ENCODE measurements at regions of chr14 and their contacts with region 1.

Region 1: GRCh38 chr14:93464271-93464670 is 33.5 kb downstream of the UNC79 start:
- DNase-seq: no peak
- H3K4me3 ChIP-seq: no peak overlapping the region
- H3K27ac ChIP-seq: no peak overlapping the region
- H3K4me1 ChIP-seq: no peaks in the 10 kb centered on the region
- H3K27me3 ChIP-seq: no peaks in the 10 kb centered on the region
- CTCF ChIP-seq: no peak

Region 2: DNA sequence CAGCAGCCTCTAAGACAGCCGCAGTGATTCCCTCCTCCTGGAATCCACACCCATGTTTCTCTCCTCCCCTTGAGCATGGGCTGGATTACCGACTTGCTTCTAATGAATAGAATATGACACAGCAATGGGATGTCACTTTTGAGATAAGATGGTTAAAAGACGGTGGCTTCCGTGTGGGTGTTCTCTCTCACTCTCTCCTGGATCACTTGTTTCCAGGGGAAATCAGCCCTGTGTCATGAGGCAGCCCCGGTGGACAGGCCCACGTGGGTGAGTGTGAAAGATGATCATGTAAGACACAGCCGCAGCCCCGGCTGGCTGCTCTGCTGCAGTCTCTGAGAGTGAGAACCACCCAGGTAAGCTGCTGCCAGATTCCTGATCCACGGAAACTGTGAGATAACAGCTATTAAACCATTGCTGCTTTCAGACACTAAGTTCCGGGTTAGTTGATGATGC is 290.3 kb before region 1 on chr14:
- intact Hi-C with region 1: no loop called
- DNase-seq: no peak
- H3K4me3 ChIP-seq: no peak overlapping the region
- H3K27ac ChIP-seq: no peak overlapping the region
- H3K4me1 ChIP-seq: no peaks in the 10 kb centered on the region
- H3K27me3 ChIP-seq: peaks cover 18% of the 10 kb centered on the region
- CTCF ChIP-seq: no peak

Region 3: DNA sequence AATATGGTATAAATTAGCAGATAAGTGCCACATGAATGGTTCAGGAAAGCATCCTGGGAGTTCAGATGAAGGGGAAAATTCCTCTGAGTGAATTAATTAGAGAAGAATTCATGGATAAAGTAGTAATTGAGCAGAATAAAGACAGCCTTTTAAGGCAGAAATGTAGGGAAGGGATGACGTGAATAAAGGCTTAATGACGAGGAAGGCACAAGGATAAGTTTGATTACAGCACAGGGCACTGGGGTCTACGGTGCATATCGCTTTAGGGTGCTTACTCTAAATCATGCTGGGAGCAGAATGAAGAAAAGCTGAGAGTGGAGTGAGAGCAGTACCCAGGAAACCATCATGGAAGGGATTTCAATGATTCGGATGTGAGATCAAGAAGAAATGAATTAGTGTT is 63.8 kb before region 1 on chr14:
- intact Hi-C with region 1: loop called (anchors 2 kb)
- DNase-seq: no peak
- H3K4me3 ChIP-seq: no peak overlapping the region
- H3K27ac ChIP-seq: no peak overlapping the region
- H3K4me1 ChIP-seq: no peaks in the 10 kb centered on the region
- H3K27me3 ChIP-seq: peaks cover 11% of the 10 kb centered on the region
- CTCF ChIP-seq: no peak

Measured in left ventricle myocardium inferior (tissue), 1 donor.